IMR-90 (cell line): ENCODE measurements at regions of chr2 and their contacts with region 1.

Region 1: GRCh38 chr2:136495636-136496035 is 269.7 kb upstream of the THSD7B start:
- DNase-seq: no peak
- ATAC-seq: no peak
- H3K4me3 ChIP-seq: no peak overlapping the region
- H3K27ac ChIP-seq: no peak overlapping the region
- H3K4me1 ChIP-seq: no peaks in the 10 kb centered on the region
- H3K27me3 ChIP-seq: no peaks in the 10 kb centered on the region
- CTCF ChIP-seq: no peak
- POLR2A ChIP-seq: no peak
- RAD21 ChIP-seq: no peak

Region 2: GRCh38 chr2:136530146-136530545 is 34.5 kb after region 1 on chr2:
- CTCF ChIA-PET with region 1: no interaction called
- POLR2A ChIA-PET with region 1: no interaction called
- dilution Hi-C with region 1: no loop called
- in situ Hi-C with region 1: no loop called
- intact Hi-C with region 1: no loop called
- DNase-seq: no peak
- ATAC-seq: no peak
- H3K4me3 ChIP-seq: no peak overlapping the region
- H3K27ac ChIP-seq: no peak overlapping the region
- H3K4me1 ChIP-seq: no peaks in the 10 kb centered on the region
- H3K27me3 ChIP-seq: no peaks in the 10 kb centered on the region
- CTCF ChIP-seq: no peak
- POLR2A ChIP-seq: no peak
- RAD21 ChIP-seq: no peak

Region 3: GRCh38 chr2:136874258-136874657 is 378.6 kb after region 1 on chr2:
- CTCF ChIA-PET with region 1: no interaction called
- POLR2A ChIA-PET with region 1: interaction called, 11 read pairs
- dilution Hi-C with region 1: no loop called
- in situ Hi-C with region 1: no loop called
- intact Hi-C with region 1: no loop called
- DNase-seq: no peak
- ATAC-seq: no peak
- H3K4me3 ChIP-seq: no peak overlapping the region
- H3K27ac ChIP-seq: no peak overlapping the region
- H3K4me1 ChIP-seq: no peaks in the 10 kb centered on the region
- H3K27me3 ChIP-seq: no peaks in the 10 kb centered on the region
- CTCF ChIP-seq: no peak
- POLR2A ChIP-seq: no peak
- RAD21 ChIP-seq: no peak